ENCODE measurements at regions of chr9 and their contacts with region 1.

Region 1: GRCh38 chr9:100098887-100099721 is at the starts of genes ERP44 and INVS:
- DNase-seq: peak; percentile 93 to 99 (median 96)
- ATAC-seq: peak; percentile 99
- H3K4me3 ChIP-seq: peak within 1 kb of the TSS; percentile 95 to 98
- H3K4me3 Mint-ChIP-seq: peak within 1 kb of the TSS; percentile 99
- H3K27ac ChIP-seq: peak within 1 kb of the TSS; percentile 72 to 85
- H3K27ac Mint-ChIP-seq: peak within 1 kb of the TSS; percentile 97
- H3K4me1 ChIP-seq: peaks cover 31% of the 10 kb centered on the region
- H3K4me1 Mint-ChIP-seq: peaks cover 44% of the 10 kb centered on the region
- H3K27me3 ChIP-seq: no peaks in the 10 kb centered on the region
- H3K27me3 Mint-ChIP-seq: no peaks in the 10 kb centered on the region
- CTCF ChIP-seq: no peak
- total RNA-seq, gene ERP44: 7.6 to 8.5 TPM
- total RNA-seq, gene INVS: 12.5 to 13.2 TPM

Region 2: DNA sequence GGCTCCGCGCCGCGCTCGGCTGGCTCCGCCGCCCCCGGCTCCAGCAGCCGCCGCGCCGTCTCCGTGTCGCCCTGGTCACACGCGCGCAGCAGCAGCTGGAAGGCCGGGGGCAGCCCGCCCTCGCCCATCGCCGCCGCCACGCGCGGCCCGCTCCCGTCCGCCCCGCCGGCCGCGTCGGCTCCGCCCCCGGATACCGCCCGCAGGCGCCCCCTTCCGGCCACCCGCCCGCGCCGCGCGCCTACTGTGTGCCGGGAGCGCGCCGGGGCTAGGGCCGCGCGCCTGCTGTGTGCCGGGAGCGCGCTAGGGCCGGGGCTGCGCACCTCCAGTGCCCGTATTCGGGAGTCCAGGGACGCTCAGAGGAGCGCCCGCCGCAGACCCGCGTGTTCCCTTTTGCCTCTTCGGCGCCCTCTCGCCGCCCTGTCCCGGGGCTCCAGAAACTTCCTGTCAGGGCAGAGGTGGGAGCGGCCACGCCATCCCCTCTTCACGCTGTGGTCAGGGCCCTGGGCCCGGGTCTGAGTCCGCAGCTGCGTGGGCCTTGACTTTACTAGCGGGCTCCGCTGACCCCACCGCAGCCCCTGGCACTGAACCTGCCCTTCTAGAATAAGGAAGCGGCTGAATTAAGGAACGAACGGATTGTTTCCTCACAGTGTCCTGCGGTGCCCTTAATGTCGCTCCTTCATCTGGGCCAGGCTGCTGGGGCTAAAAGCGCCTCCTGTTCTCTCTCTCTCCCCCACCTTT is 1302.6 kb before region 1 on chr9 and contains the start of gene ANKS6:
- CTCF ChIA-PET with region 1: no interaction called
- POLR2A ChIA-PET with region 1: no interaction called
- intact Hi-C with region 1: loop called in 1 of 2 experiments (anchors 10 kb)
- DNase-seq: peak; percentile 63 to 91 (median 85)
- ATAC-seq: peak; percentile 92
- H3K4me3 ChIP-seq: peak within 1 kb of the TSS; percentile 77 to 95
- H3K4me3 Mint-ChIP-seq: peak within 1 kb of the TSS; percentile 88
- H3K27ac ChIP-seq: peak within 1 kb of the TSS; percentile 61 to 66
- H3K27ac Mint-ChIP-seq: peak within 1 kb of the TSS; percentile 85
- H3K4me1 ChIP-seq: peaks cover 15% of the 10 kb centered on the region
- H3K4me1 Mint-ChIP-seq: peaks cover 32% of the 10 kb centered on the region
- H3K27me3 ChIP-seq: no peaks in the 10 kb centered on the region
- H3K27me3 Mint-ChIP-seq: no peaks in the 10 kb centered on the region
- CTCF ChIP-seq: peak; percentile 28
- total RNA-seq, gene ANKS6: 10.6 to 12.7 TPM

Region 3: GRCh38 chr9:99906403-99907207 is 192.5 kb before region 1 on chr9 and contains the start of gene STX17:
- CTCF ChIA-PET with region 1: no interaction called
- POLR2A ChIA-PET with region 1: no interaction called
- intact Hi-C with region 1: loop called (anchors 2 kb)
- DNase-seq: peak; percentile 64 to 92 (median 84)
- ATAC-seq: peak; percentile 85
- H3K4me3 ChIP-seq: peak within 1 kb of the TSS; percentile 95 to 96
- H3K4me3 Mint-ChIP-seq: peak within 1 kb of the TSS; percentile 97
- H3K27ac ChIP-seq: peak within 1 kb of the TSS; percentile 98 to 99
- H3K27ac Mint-ChIP-seq: peak within 1 kb of the TSS; percentile 100
- H3K4me1 ChIP-seq: peaks cover 20% of the 10 kb centered on the region
- H3K4me1 Mint-ChIP-seq: peaks cover 33% of the 10 kb centered on the region
- H3K27me3 ChIP-seq: no peaks in the 10 kb centered on the region
- H3K27me3 Mint-ChIP-seq: no peaks in the 10 kb centered on the region
- CTCF ChIP-seq: no peak
- total RNA-seq, gene STX17: 21.0 to 23.1 TPM

Region 4: GRCh38 chr9:99954819-99955218 is 144.3 kb before region 1 on chr9:
- CTCF ChIA-PET with region 1: no interaction called
- POLR2A ChIA-PET with region 1: no interaction called
- intact Hi-C with region 1: no loop called
- DNase-seq: no peak
- ATAC-seq: no peak
- H3K4me3 ChIP-seq: no peak overlapping the region
- H3K4me3 Mint-ChIP-seq: no peak overlapping the region
- H3K27ac ChIP-seq: no peak overlapping the region
- H3K27ac Mint-ChIP-seq: no peak overlapping the region
- H3K4me1 ChIP-seq: no peaks in the 10 kb centered on the region
- H3K4me1 Mint-ChIP-seq: peaks cover 17% of the 10 kb centered on the region
- H3K27me3 ChIP-seq: no peaks in the 10 kb centered on the region
- H3K27me3 Mint-ChIP-seq: no peaks in the 10 kb centered on the region
- CTCF ChIP-seq: no peak

Region 5: GRCh38 chr9:100111235-100111634 is 12.1 kb after region 1 on chr9:
- CTCF ChIA-PET with region 1: no interaction called
- POLR2A ChIA-PET with region 1: no interaction called
- intact Hi-C with region 1: no loop called
- DNase-seq: no peak
- ATAC-seq: no peak
- H3K4me3 ChIP-seq: no peak overlapping the region
- H3K4me3 Mint-ChIP-seq: no peak overlapping the region
- H3K27ac ChIP-seq: no peak overlapping the region
- H3K27ac Mint-ChIP-seq: no peak overlapping the region
- H3K4me1 ChIP-seq: no peaks in the 10 kb centered on the region
- H3K4me1 Mint-ChIP-seq: peaks cover 21% of the 10 kb centered on the region
- H3K27me3 ChIP-seq: no peaks in the 10 kb centered on the region
- H3K27me3 Mint-ChIP-seq: no peaks in the 10 kb centered on the region
- CTCF ChIP-seq: no peak

Region 6: DNA sequence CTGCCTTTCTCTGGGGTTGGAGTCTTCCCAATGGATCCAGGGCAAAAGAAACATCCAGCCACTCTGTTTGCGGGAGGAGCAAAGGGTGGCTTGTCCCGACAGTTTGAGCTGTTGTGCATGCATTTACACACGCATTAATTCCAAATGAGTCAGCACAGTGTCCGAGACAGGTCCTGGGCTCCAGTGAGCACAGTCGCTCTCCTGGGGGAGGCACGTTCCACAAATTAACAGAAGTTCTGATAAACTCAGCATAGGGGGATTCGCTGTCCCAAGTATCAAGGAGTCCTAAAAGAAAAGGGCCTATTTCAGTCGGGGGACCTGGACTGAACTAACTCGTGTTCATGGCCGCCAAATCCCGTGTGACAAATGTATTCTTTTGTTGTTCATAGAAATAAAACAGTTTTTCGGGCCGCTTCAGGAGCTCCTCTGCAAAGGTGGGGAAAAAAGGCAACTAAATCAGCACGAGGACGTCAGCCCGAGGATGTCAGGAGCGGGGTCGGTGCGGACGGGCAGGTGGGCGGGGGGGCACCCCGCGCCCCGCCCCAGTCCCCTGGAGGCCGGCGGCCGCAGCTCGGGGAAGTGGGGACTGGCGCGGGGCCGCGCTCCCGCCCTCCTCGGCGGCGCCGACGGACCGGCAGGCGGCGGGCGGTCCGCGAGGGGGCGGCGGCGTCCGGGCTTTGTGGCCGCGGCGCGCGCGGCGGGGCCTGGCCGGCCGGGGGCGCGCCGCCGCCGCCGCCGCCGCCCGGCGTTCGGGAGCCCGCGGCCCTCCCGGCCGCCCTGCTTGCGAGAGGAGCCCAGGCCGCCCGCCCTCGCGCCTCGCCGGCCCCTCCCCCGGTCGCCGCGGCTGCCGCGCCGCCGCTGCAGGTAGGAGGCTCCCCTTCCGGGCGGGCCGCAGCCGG is 327.7 kb after region 1 on chr9 and contains the start of gene MSANTD3:
- CTCF ChIA-PET with region 1: no interaction called
- POLR2A ChIA-PET with region 1: no interaction called
- intact Hi-C with region 1: loop called in 1 of 2 experiments (anchors 5 kb)
- DNase-seq: peak; percentile 20 to 78 (median 58)
- ATAC-seq: peak; percentile 84
- H3K4me3 ChIP-seq: peak within 1 kb of the TSS; percentile 69 to 74
- H3K4me3 Mint-ChIP-seq: peak within 1 kb of the TSS; percentile 97
- H3K27ac ChIP-seq: peak within 1 kb of the TSS; percentile 31 to 35
- H3K27ac Mint-ChIP-seq: peak within 1 kb of the TSS; percentile 95
- H3K4me1 ChIP-seq: peaks cover 18% of the 10 kb centered on the region
- H3K4me1 Mint-ChIP-seq: peaks cover 35% of the 10 kb centered on the region
- H3K27me3 ChIP-seq: no peaks in the 10 kb centered on the region
- H3K27me3 Mint-ChIP-seq: peaks cover 4% of the 10 kb centered on the region
- CTCF ChIP-seq: no peak
- total RNA-seq, gene MSANTD3: 10.2 to 10.8 TPM

Region 7: GRCh38 chr9:101530077-101530711 is 1431.1 kb after region 1 on chr9:
- CTCF ChIA-PET with region 1: no interaction called
- POLR2A ChIA-PET with region 1: no interaction called
- intact Hi-C with region 1: loop called in 1 of 2 experiments (anchors 5 kb)
- DNase-seq: peak; percentile 36 to 83 (median 65)
- ATAC-seq: peak; percentile 33
- H3K4me3 ChIP-seq: no peak overlapping the region
- H3K4me3 Mint-ChIP-seq: no peak overlapping the region
- H3K27ac ChIP-seq: no peak overlapping the region
- H3K27ac Mint-ChIP-seq: no peak overlapping the region
- H3K4me1 ChIP-seq: peaks cover 14% of the 10 kb centered on the region
- H3K4me1 Mint-ChIP-seq: peaks cover 20% of the 10 kb centered on the region
- H3K27me3 ChIP-seq: no peaks in the 10 kb centered on the region
- H3K27me3 Mint-ChIP-seq: peaks cover 10% of the 10 kb centered on the region
- CTCF ChIP-seq: peak; percentile 86